Right ventricle myocardium inferior (tissue), 1 donor: ENCODE measurements at regions of chr10 and their contacts with region 1.

Region 1: GRCh38 chr10:69644658-69645295 is 14.7 kb downstream of the FAM241B start:
- DNase-seq: no peak
- ATAC-seq: peak; percentile 22

Region 2: GRCh38 chr10:69558559-69558958 is 86.2 kb before region 1 on chr10:
- intact Hi-C with region 1: no loop called
- DNase-seq: no peak
- ATAC-seq: no peak

Region 3: GRCh38 chr10:69600761-69601330 is 43.9 kb before region 1 on chr10:
- intact Hi-C with region 1: no loop called
- DNase-seq: no peak
- ATAC-seq: no peak

Region 4: DNA sequence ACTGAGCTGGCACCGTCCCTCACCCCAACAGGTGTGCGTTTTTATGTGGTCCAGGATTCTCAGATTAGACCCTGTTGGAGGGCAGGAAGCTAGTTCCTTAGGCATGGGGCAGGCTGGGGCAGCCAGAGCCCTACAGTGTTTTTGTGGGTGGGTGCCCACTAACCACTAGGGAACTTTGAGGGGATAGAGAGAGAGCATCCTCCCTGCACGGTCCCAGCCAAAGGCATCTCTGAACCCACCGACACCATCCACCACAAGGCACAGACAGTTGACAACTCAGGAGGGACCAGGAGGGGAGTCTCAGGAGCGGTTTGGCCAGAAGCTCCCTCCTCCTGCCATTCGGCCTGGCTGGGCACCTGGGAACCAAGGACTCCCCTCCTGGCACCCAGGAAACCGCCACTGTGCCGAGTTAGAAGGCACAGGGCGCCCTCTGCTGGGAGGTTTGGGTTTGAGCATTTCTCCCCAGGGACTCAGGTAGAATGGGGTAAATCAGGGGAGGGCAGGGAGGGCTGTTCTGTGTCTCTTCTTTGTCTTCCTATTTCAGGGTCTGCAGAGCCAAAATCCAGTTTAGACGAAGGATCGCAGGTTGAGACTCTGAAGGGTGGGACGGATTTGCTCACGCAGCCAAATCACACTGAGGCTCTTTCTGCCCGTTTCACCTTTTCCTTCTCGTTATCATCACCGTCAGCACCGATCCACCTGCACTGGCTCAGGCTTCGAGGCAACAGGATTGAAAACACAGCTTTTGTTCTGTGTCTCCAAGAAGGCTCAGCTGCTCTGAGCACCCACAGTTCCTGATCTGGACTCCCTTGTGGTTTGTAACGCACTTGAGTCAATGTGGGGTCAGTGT is 72.2 kb after region 1 on chr10:
- intact Hi-C with region 1: loop called (anchors 5 kb)
- DNase-seq: peak; percentile 69
- ATAC-seq: peak; percentile 23